ENCODE measurements at regions of chr22 and their contacts with region 1.

Region 1: GRCh38 chr22:18994701-18995326 is 58.7 kb upstream of the PRODH start:
- DNase-seq: no peak
- ATAC-seq: peak; percentile 18; the same call in 1 of the 2 replicates
- H3K4me3 ChIP-seq: no peak overlapping the region
- H3K27ac ChIP-seq: no peak overlapping the region
- H3K4me1 ChIP-seq: no peaks in the 10 kb centered on the region
- H3K27me3 ChIP-seq: no peaks in the 10 kb centered on the region
- CTCF ChIP-seq: no peak

Region 2: GRCh38 chr22:18970176-18970947 is 24.5 kb before region 1 on chr22:
- CTCF ChIA-PET with region 1: no interaction called
- POLR2A ChIA-PET with region 1: no interaction called
- intact Hi-C with region 1: no loop called
- DNase-seq: no peak
- ATAC-seq: peak; percentile 62
- H3K4me3 ChIP-seq: peak overlapping the region; percentile 70
- H3K27ac ChIP-seq: no peak overlapping the region
- H3K4me1 ChIP-seq: no peaks in the 10 kb centered on the region
- H3K27me3 ChIP-seq: no peaks in the 10 kb centered on the region
- CTCF ChIP-seq: no peak

Region 3: DNA sequence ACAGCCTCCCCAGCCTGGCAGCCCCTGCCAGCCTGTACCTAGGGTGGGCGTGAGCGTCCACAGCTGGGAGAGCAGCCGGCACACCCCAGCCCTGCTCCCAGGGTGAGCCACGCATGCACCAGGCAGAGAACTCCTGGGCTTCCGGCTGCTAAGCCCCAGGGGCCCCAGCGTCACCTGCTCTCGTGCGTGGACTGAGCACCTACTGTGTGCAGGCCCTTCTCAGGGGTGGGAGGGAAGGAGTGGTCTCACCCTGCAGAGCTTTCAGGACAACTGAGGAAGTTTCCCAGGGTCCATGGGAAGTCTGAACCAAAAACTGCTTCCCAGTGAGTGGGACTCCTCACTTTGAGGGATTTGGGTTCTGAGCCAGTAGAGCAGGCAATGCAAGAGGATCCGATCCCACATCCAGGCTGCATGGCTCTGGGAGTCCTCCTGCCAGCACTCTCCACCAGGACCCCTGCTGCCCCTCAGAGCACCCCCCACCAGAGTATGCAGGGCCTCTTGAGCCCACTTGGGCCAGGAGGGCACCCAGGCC is 11.6 kb before region 1 on chr22:
- CTCF ChIA-PET with region 1: no interaction called
- POLR2A ChIA-PET with region 1: interaction called, 17 read pairs
- intact Hi-C with region 1: no loop called
- DNase-seq: no peak
- ATAC-seq: no peak
- H3K4me3 ChIP-seq: no peak overlapping the region
- H3K27ac ChIP-seq: no peak overlapping the region
- H3K4me1 ChIP-seq: no peaks in the 10 kb centered on the region
- H3K27me3 ChIP-seq: no peaks in the 10 kb centered on the region
- CTCF ChIP-seq: no peak

Region 4: GRCh38 chr22:19016081-19016766 is 21.4 kb after region 1 on chr22:
- CTCF ChIA-PET with region 1: no interaction called
- POLR2A ChIA-PET with region 1: interaction called, 10 read pairs
- intact Hi-C with region 1: no loop called
- DNase-seq: no peak
- ATAC-seq: no peak
- H3K4me3 ChIP-seq: no peak overlapping the region
- H3K27ac ChIP-seq: no peak overlapping the region
- H3K4me1 ChIP-seq: peaks cover 5% of the 10 kb centered on the region; the same call in 1 of the 2 replicates
- H3K27me3 ChIP-seq: no peaks in the 10 kb centered on the region; the same call in none of the 2 replicates
- CTCF ChIP-seq: no peak

Region 5: GRCh38 chr22:19079691-19080090 is 84.9 kb after region 1 on chr22:
- CTCF ChIA-PET with region 1: no interaction called
- POLR2A ChIA-PET with region 1: no interaction called
- intact Hi-C with region 1: no loop called
- DNase-seq: no peak
- ATAC-seq: no peak
- H3K4me3 ChIP-seq: no peak overlapping the region
- H3K27ac ChIP-seq: no peak overlapping the region
- H3K4me1 ChIP-seq: no peaks in the 10 kb centered on the region
- H3K27me3 ChIP-seq: no peaks in the 10 kb centered on the region
- CTCF ChIP-seq: no peak